ENCODE measurements at regions of chr12 and their contacts with region 1.

Region 1: GRCh38 chr12:614411-614970 is 48.8 kb downstream of the NINJ2 start:
- DNase-seq: no peak
- H3K4me3 Mint-ChIP-seq: no peak overlapping the region
- H3K27ac Mint-ChIP-seq: no peak overlapping the region
- H3K4me1 Mint-ChIP-seq: peaks cover 62% of the 10 kb centered on the region
- H3K27me3 Mint-ChIP-seq: no peaks in the 10 kb centered on the region

Region 2: GRCh38 chr12:575948-576612 is 38.4 kb before region 1 on chr12:
- intact Hi-C with region 1: loop called (anchors 2 kb)
- DNase-seq: peak; percentile 81
- H3K4me3 Mint-ChIP-seq: no peak overlapping the region
- H3K27ac Mint-ChIP-seq: peak overlapping the region; percentile 80
- H3K4me1 Mint-ChIP-seq: peaks cover 33% of the 10 kb centered on the region
- H3K27me3 Mint-ChIP-seq: peaks cover 4% of the 10 kb centered on the region

Region 3: DNA sequence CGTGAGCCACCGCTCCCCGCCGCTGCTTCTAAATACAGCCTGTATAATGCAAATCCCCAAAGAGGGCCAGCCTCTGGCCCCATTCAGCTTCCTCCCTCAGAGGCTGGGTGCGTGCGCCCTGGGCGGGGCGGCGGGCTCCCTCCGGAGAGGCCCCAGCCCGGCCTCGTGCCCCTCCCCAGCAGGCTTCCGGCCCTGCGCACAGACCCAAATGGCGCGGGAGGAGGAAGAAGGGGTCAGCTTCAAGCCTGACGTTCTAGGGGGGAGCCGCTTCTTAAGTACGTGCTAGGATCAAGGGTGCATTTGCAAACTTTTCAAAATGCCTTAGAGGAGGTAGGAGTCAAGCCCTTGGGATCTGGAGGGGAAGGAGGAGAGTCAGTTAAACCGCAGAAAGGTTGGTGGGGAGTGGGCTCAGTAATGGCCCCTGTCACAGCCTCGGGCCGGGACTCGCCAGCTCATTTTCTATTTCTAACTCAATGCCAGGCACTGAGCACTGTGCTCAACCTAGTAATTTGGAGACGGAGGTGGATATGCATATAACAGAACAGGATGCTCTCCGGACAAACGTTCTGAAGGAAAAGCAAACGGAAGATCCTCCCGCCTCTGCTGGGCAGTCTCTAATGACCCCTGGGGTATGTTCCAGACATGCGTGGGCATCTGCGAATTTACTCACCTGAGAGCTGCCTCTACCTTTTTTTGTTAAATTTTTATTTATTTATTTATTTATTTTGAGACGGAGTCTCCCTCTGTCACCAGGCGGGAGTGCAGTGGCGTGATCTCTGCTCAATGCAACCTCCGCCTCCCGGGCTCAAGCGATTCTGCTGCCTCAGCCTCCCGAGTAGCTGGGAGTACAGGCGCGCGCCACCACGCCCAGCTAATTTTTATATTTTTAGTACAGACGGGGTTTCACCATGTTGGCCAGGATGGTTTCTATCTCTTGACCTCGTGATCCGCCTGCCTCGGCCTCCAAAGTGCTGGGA is 16.5 kb after region 1 on chr12:
- intact Hi-C with region 1: loop called (anchors 2 kb)
- DNase-seq: peak; percentile 84
- H3K4me3 Mint-ChIP-seq: peak overlapping the region; percentile 96
- H3K27ac Mint-ChIP-seq: peak overlapping the region; percentile 98
- H3K4me1 Mint-ChIP-seq: peaks cover 45% of the 10 kb centered on the region
- H3K27me3 Mint-ChIP-seq: no peaks in the 10 kb centered on the region

Region 4: DNA sequence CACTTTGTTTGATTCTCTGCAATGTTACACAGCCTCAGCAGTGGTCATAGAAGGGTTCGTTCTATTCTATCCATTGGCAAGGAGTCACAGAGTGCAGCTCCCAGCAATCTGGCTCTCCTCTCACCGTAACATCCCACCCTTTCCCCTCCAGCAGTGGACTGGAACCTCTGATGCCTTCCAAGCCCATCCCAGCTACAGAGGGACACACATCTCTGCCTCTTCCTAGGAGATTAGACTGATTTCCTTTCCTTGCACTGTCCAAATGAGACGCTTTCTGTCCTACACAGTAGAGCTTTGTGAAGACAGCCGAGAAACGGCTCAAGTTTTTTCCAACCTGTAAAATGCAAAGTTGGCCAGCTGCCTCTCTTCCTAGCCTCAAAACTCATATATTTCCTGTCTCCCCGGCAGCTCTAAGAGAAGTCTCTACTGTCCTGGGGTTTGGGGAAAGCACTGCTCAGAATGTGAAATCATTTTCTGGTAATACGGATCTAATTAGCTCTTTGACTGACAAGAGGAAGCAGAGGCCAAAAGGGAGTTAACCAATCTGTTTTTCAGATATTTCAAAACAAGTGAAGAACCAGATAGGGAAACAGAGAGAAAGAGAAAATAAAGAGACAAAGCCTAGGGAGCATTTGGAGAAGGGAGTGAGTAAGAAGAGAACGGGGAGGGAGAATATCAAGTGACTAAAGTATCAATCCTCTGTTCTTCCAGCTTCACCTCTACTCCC is 48.2 kb after region 1 on chr12:
- intact Hi-C with region 1: loop called (anchors 1 kb)
- DNase-seq: no peak
- H3K4me3 Mint-ChIP-seq: peak overlapping the region; percentile 69
- H3K27ac Mint-ChIP-seq: peak overlapping the region; percentile 78
- H3K4me1 Mint-ChIP-seq: peaks cover 56% of the 10 kb centered on the region
- H3K27me3 Mint-ChIP-seq: no peaks in the 10 kb centered on the region